ENCODE measurements at regions of chr9 and their contacts with region 1.

Region 1: DNA sequence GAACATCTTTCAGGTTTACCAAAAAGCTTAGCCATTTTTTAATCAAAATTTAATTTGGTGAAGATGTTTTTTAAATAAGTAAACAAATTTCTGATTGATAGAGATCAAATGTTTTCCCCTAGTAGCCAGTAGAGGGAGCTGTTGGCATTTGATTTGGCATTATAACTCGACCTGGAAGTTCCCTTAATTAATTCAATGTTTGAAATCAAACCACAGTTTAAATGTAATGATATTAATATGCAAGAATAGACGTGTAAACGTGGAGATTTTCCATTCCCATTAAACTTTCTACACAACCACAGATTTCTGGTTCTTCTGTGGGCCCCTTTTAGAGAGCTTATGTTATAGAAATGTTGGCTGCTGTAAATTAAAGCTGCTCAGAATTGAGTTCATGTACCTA is 148.1 kb upstream of the MPDZ start:
- DNase-seq: peak in 2 of 4 donors; percentile 16 to 43
- ATAC-seq: peak; percentile 47
- H3K4me3 ChIP-seq: no peak overlapping the region
- H3K27ac ChIP-seq: no peak overlapping the region
- H3K4me1 ChIP-seq: no peaks in the 10 kb centered on the region
- H3K27me3 ChIP-seq: no peaks in the 10 kb centered on the region
- CTCF ChIP-seq: peak; percentile 59 to 82 (median 71)
- POLR2A ChIP-seq: no peak

Region 2: GRCh38 chr9:14156046-14156445 is 728.5 kb after region 1 on chr9:
- intact Hi-C with region 1: no loop called
- DNase-seq: no peak
- ATAC-seq: no peak
- H3K4me3 ChIP-seq: no peak overlapping the region
- H3K27ac ChIP-seq: no peak overlapping the region
- H3K4me1 ChIP-seq: peaks cover 15% of the 10 kb centered on the region
- H3K27me3 ChIP-seq: no peaks in the 10 kb centered on the region
- CTCF ChIP-seq: no peak
- POLR2A ChIP-seq: no peak

Region 3: DNA sequence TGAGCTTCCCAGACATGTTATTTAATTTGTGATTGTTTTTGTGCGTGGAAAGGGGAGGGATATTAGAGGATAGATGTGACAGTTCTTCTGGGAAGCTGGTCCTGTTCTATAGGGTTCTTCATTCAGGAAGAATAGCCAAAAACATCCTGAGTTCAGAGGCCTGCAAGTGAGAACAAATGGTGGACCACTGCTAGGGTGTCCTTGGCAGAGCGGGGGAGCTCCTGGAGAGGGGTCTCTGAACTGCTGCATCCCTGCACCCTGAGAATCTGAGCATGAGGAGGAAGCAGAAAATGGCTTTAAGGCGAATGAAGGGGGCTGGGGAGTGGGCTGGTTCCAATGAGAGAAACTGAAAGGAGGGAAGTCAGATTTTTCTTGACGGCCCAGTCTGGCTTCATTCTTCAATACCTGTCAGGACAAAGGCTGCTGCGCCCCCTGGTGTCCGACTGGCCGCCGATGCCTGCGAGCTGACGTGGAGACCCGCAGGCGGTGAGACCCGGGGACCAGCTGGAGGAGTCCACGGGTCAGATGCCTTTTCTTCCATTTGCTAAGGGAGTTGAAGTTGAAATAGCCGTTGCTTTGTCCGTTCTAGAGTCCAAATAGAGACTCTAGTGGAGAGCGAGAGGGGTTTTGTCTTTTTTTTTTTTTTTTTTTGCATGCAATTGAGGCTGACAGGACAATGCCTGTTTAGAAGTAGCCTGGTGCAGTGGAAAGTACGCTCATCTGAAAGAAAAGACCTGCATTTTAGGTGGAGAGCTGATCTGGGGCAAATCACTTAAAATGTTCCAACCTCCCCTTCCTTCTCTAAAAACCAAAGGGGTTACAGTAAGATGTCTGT is 925.9 kb after region 1 on chr9:
- intact Hi-C with region 1: loop called (anchors 5 kb)
- DNase-seq: peak; percentile 91 to 97 (median 94)
- ATAC-seq: peak; percentile 86
- H3K4me3 ChIP-seq: no peak overlapping the region
- H3K27ac ChIP-seq: no peak overlapping the region
- H3K4me1 ChIP-seq: peaks cover 16% of the 10 kb centered on the region
- H3K27me3 ChIP-seq: peaks cover 0 to 15% of the 10 kb centered on the region in 2 donors
- CTCF ChIP-seq: peak; percentile 86 to 97 (median 89)
- POLR2A ChIP-seq: no peak

Region 4: DNA sequence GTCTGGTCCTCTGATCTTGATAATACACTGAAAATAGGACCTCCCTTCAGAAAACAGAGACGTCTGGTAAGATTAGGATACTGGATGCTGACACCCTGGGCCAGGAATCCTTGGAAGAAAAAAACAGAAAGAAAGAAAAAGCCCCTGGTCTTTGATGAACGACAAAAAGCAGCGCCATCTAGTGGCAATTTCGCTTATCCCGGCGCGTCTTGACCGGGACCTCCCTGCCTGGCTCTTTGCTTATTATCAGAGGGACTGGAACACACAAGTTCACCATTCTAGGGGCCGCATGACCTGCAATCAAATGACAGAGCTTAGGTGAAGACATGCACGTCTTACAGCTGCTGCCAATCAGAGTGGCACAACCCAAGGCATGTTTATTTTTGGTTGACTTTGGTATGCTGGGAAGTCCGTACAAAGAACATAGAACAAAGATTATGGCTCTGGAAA is 1001.2 kb after region 1 on chr9:
- intact Hi-C with region 1: loop called (anchors 10 kb)
- DNase-seq: peak; percentile 66 to 72 (median 68)
- ATAC-seq: peak; percentile 64
- H3K4me3 ChIP-seq: no peak overlapping the region
- H3K27ac ChIP-seq: no peak overlapping the region
- H3K4me1 ChIP-seq: peaks cover 9% of the 10 kb centered on the region
- H3K27me3 ChIP-seq: no peaks in the 10 kb centered on the region
- CTCF ChIP-seq: peak; percentile 56 to 83 (median 59)
- POLR2A ChIP-seq: no peak